Posterior vena cava (tissue), 2 donors: ENCODE measurements at regions of chr14 and their contacts with region 1.

Region 1: DNA sequence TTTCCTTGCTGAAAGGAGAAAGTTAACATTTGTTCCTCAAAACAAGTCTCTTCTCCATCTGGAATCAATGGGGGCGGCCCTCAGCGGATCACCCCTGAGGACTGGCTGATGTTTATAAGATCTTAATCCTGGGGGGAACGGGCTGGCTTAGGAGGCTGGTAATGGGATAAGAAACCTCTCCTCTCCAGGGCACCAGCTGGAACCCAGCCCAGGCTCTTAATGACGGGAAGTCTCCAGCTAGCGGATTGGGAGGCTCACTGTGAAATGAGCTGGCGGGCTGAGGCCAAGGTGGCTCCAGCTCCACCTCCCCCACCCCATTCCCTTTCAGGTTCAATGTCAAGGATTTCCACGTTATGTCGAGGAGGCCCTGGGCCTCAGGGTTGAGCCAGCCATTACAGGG is 1133.0 kb downstream of the VRK1 start:
- DNase-seq: no peak

Region 2: DNA sequence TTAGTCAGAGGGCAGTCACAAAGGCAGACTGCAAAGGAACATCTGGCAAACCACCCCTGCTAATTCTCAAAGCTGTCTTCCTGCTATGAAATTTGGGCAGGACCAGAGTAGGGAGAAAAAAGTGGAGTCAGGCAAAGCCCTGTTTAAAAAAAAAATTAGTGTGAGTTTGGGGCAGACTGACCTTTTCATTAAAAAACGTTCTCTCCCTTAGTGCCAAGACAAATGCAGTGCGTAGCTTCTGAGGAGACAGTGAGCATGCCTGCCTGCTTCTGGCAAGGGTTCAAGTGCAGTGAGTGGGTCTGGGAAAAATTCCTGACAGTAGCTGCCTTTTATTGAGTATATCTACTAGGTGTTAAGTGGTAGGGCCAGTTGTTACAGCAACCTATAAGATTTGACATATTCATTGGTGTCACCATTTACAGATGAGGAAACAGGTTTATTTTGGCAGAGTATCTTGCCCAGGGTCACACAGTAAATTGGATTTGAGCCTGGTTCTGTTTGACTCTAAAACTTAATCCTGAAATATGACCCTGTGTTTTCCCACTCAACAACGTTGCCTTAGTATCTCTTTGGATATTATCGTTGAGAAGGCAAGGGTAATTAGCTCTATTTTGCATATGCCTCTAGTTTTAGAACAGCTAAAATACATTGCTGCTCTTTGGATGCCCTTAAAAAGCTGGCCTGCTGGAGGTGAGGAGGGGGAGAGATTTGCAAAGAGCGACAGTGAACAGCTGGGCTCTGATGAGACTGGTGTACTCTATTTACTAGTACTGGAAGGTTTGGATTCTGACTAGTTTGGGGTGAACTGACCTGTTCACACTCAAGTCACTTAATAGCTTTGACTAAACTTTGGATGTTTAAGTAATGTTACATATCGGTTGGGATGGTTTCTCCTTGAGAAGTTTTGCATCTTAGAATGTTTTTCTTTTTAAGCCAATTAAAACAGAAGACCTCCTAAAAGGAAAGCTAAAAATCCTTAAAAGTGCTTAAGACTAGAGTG is 1355.2 kb before region 1 on chr14:
- intact Hi-C with region 1: no loop called
- DNase-seq: no peak

Region 3: DNA sequence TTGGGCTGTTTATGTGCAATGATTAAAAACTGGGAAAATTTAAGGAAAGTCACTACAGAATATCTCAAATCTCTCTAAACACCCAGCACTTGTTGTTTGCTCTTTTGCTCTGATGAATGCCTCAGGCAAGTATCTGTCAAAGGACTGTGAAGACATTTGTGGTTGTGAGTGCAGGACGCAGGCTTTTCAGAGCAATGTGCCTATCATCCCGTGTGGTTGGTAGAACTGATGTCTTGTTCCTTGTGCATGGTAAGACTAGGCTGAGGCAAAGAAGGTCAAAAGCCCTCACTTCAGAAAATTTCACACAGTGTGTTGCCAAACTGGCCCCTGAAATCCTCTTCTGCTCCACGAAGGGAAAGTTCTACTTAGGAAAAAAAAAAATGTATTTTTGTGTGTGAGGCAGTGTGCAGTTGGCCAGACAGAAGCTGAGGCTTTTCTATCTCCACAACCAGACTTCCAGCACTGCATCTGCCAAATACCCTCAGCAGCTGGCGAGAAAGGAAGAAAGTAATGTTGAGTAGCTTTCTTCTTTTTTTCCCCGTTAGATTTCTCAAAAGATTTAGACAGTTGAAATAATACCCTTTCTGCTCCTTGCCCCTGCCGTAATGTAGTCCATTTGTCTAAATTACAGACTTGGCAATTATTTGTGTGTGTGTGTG is 29.8 kb before region 1 on chr14:
- intact Hi-C with region 1: loop called in 1 of 2 experiments (anchors 1 kb)
- DNase-seq: no peak